B cell (primary cell): ENCODE measurements at regions of chr1 and their contacts with region 1.

Region 1: GRCh38 chr1:40774266-40774998 is 9.2 kb upstream of the KCNQ4 start:
- DNase-seq: peak; percentile 73
- ATAC-seq: peak; percentile 49
- H3K4me3 ChIP-seq: no peak overlapping the region
- H3K4me3 Mint-ChIP-seq: no peak overlapping the region
- H3K27ac ChIP-seq: no peak overlapping the region
- H3K27ac Mint-ChIP-seq: no peak overlapping the region
- H3K4me1 ChIP-seq: no peaks in the 10 kb centered on the region
- H3K4me1 Mint-ChIP-seq: peaks cover 2% of the 10 kb centered on the region
- H3K27me3 ChIP-seq: no peaks in the 10 kb centered on the region
- H3K27me3 Mint-ChIP-seq: no peaks in the 10 kb centered on the region
- CTCF ChIP-seq: peak; percentile 85

Region 2: DNA sequence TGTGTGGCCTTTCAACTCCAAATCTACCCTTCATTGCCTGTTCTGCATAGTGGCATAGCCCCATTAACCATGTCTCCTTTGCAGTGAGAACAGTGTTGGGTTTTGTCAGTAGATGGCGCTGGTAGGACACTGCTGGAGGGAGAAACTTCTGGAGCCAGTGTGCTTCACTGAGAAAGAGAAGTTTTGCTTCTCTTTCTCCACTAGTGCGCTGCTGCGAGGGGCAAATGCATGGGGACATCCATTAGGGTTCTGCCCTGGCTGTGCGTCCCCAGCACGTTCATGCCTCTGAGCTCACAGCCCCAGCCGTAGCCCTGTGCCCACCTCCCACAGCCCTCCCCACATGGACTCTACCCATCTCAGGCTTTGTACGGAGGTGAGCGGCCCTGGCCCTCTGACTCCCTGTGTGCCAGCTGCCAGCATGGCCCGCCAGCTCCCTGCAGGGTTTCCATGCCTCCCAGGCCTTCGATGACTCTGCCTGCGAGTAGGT is 162.0 kb before region 1 on chr1:
- CTCF ChIA-PET with region 1: interaction called, 9 read pairs
- POLR2A ChIA-PET with region 1: no interaction called
- intact Hi-C with region 1: loop called (anchors 5 kb)
- DNase-seq: peak; percentile 81
- ATAC-seq: peak; percentile 91
- H3K4me3 ChIP-seq: no peak overlapping the region
- H3K4me3 Mint-ChIP-seq: no peak overlapping the region
- H3K27ac ChIP-seq: no peak overlapping the region
- H3K27ac Mint-ChIP-seq: no peak overlapping the region
- H3K4me1 ChIP-seq: peaks cover 0 to 2% of the 10 kb centered on the region in 2 donors
- H3K4me1 Mint-ChIP-seq: no peaks in the 10 kb centered on the region
- H3K27me3 ChIP-seq: no peaks in the 10 kb centered on the region
- H3K27me3 Mint-ChIP-seq: peaks cover 3% of the 10 kb centered on the region
- CTCF ChIP-seq: peak; percentile 91

Region 3: GRCh38 chr1:40755067-40755466 is 19.4 kb before region 1 on chr1:
- CTCF ChIA-PET with region 1: interaction called, 40 read pairs
- POLR2A ChIA-PET with region 1: no interaction called
- intact Hi-C with region 1: no loop called
- DNase-seq: no peak
- ATAC-seq: no peak
- H3K4me3 ChIP-seq: no peak overlapping the region
- H3K4me3 Mint-ChIP-seq: no peak overlapping the region
- H3K27ac ChIP-seq: no peak overlapping the region
- H3K27ac Mint-ChIP-seq: no peak overlapping the region
- H3K4me1 ChIP-seq: no peaks in the 10 kb centered on the region
- H3K4me1 Mint-ChIP-seq: peaks cover 9% of the 10 kb centered on the region
- H3K27me3 ChIP-seq: no peaks in the 10 kb centered on the region
- H3K27me3 Mint-ChIP-seq: no peaks in the 10 kb centered on the region
- CTCF ChIP-seq: no peak

Region 4: GRCh38 chr1:40763742-40764532 is 10.5 kb before region 1 on chr1:
- CTCF ChIA-PET with region 1: interaction called, 38 read pairs
- POLR2A ChIA-PET with region 1: no interaction called
- intact Hi-C with region 1: no loop called
- DNase-seq: no peak
- ATAC-seq: no peak
- H3K4me3 ChIP-seq: no peak overlapping the region
- H3K4me3 Mint-ChIP-seq: peak overlapping the region; percentile 20
- H3K27ac ChIP-seq: peak overlapping the region in 1 of 2 donors; percentile 44
- H3K27ac Mint-ChIP-seq: peak overlapping the region; percentile 71
- H3K4me1 ChIP-seq: peaks cover 8 to 26% of the 10 kb centered on the region in 2 donors
- H3K4me1 Mint-ChIP-seq: peaks cover 33% of the 10 kb centered on the region
- H3K27me3 ChIP-seq: no peaks in the 10 kb centered on the region
- H3K27me3 Mint-ChIP-seq: no peaks in the 10 kb centered on the region
- CTCF ChIP-seq: no peak

Region 5: GRCh38 chr1:40802078-40802741 is 27.8 kb after region 1 on chr1:
- CTCF ChIA-PET with region 1: interaction called, 15 read pairs
- POLR2A ChIA-PET with region 1: interaction called, 3 read pairs
- intact Hi-C with region 1: no loop called
- DNase-seq: peak; percentile 88
- ATAC-seq: peak; percentile 95
- H3K4me3 ChIP-seq: peak overlapping the region; percentile 45 to 89 (median 58)
- H3K4me3 Mint-ChIP-seq: peak overlapping the region; percentile 86
- H3K27ac ChIP-seq: peak overlapping the region; percentile 25 to 39
- H3K27ac Mint-ChIP-seq: no peak overlapping the region
- H3K4me1 ChIP-seq: peaks cover 16 to 40% of the 10 kb centered on the region in 2 donors
- H3K4me1 Mint-ChIP-seq: peaks cover 30% of the 10 kb centered on the region
- H3K27me3 ChIP-seq: no peaks in the 10 kb centered on the region
- H3K27me3 Mint-ChIP-seq: no peaks in the 10 kb centered on the region
- CTCF ChIP-seq: no peak

Region 6: DNA sequence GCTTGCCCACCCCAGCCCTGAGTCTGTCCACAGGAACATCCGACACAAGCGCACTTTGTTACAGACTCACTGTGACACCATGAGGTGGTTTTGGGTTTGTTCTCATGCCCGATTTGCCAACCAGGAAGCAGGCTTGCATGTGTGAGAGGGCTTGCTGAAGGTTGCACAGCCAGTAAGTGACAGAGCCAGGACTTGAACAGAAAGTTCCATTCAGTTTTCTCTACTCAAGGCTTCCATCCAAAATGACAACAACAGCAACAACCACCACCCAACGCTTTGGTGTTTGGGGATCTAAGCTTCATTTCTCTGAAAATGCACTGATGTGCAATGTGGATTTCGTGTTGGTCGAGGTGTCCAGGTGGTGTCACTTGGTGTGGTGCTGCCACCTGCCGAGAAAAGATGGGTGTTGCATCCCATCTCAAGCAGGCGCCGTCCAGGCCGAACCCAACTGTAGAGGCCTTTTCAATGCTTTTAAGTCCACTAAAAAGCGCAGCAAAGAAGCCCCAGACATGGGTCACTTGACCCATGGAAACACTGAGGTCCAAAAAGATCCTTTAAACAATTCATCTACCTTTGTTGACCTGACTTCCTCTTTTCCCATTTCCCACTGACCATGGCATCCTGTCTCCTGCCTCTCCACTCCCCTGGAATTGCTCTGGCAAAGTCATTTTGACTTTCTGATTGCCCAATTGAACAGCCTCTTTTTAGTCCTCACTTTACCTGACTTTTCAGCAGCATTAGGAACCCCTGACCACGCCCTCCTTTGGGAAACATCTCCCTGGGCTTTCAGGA is 75.6 kb after region 1 on chr1:
- CTCF ChIA-PET with region 1: interaction called, 193 read pairs
- POLR2A ChIA-PET with region 1: no interaction called
- intact Hi-C with region 1: loop called (anchors 1 kb)
- DNase-seq: peak; percentile 85
- ATAC-seq: peak; percentile 98
- H3K4me3 ChIP-seq: no peak overlapping the region
- H3K4me3 Mint-ChIP-seq: peak overlapping the region; percentile 35
- H3K27ac ChIP-seq: no peak overlapping the region
- H3K27ac Mint-ChIP-seq: no peak overlapping the region
- H3K4me1 ChIP-seq: peaks cover 8% of the 10 kb centered on the region in 2 donors
- H3K4me1 Mint-ChIP-seq: peaks cover 11% of the 10 kb centered on the region
- H3K27me3 ChIP-seq: no peaks in the 10 kb centered on the region
- H3K27me3 Mint-ChIP-seq: peaks cover 5% of the 10 kb centered on the region
- CTCF ChIP-seq: peak; percentile 98

Region 7: GRCh38 chr1:40951943-40952743 is 177.7 kb after region 1 on chr1:
- CTCF ChIA-PET with region 1: interaction called, 24 read pairs
- POLR2A ChIA-PET with region 1: no interaction called
- intact Hi-C with region 1: no loop called
- DNase-seq: peak; percentile 64
- ATAC-seq: peak; percentile 41
- H3K4me3 ChIP-seq: no peak overlapping the region
- H3K4me3 Mint-ChIP-seq: no peak overlapping the region
- H3K27ac ChIP-seq: no peak overlapping the region
- H3K27ac Mint-ChIP-seq: no peak overlapping the region
- H3K4me1 ChIP-seq: peaks cover 5 to 6% of the 10 kb centered on the region in 2 donors
- H3K4me1 Mint-ChIP-seq: peaks cover 4% of the 10 kb centered on the region
- H3K27me3 ChIP-seq: peaks cover 0 to 27% (median 11%) of the 10 kb centered on the region in 4 experiments
- H3K27me3 Mint-ChIP-seq: peaks cover 43% of the 10 kb centered on the region
- CTCF ChIP-seq: peak; percentile 85

Region 8: GRCh38 chr1:41073971-41074370 is 299.5 kb after region 1 on chr1:
- CTCF ChIA-PET with region 1: no interaction called
- POLR2A ChIA-PET with region 1: no interaction called
- intact Hi-C with region 1: no loop called
- DNase-seq: no peak
- ATAC-seq: no peak
- H3K4me3 ChIP-seq: no peak overlapping the region
- H3K4me3 Mint-ChIP-seq: no peak overlapping the region
- H3K27ac ChIP-seq: no peak overlapping the region
- H3K27ac Mint-ChIP-seq: no peak overlapping the region
- H3K4me1 ChIP-seq: no peaks in the 10 kb centered on the region
- H3K4me1 Mint-ChIP-seq: no peaks in the 10 kb centered on the region
- H3K27me3 ChIP-seq: no peaks in the 10 kb centered on the region
- H3K27me3 Mint-ChIP-seq: no peaks in the 10 kb centered on the region
- CTCF ChIP-seq: no peak

Region 9: DNA sequence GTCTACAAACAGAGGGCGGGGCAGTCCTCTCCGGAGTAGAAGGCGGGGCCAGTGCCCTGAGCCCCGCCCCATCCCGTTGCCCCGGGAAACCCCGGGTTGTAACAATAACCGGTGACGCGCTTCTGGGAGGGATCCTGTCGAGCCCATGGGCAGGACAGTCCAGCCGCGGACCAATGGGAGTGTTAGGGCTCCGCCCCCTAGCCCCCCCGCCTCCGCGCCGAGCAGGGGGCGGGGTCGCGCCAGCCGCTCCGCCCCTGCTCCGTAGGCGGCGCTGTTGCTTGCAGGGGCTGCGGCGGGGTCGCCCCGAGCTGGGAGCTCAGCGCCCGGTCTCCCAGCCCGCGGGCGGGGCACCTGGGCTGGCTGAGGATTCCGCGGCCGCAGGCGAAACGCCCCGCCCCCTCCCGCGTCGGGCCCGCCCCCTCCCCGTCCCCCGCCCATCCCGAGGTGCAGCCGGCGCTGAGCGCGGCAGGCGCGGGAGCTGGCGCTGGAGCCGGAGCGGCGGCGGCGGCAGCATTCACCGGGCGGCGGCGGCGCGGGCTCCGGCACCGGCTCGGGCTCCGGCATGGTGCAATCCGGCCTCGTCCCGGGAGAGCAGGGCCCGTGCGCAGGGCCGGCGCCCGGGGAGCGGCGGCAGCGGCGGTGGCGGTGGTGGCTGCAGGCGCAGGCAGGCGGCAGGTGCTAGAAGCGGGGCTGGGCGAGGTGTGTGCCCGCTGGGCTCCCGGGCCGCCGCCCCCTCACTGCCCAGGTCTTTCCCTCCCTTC is 586.7 kb after region 1 on chr1 and contains the start of gene FOXO6:
- CTCF ChIA-PET with region 1: no interaction called
- POLR2A ChIA-PET with region 1: no interaction called
- intact Hi-C with region 1: no loop called
- DNase-seq: peak; percentile 97
- ATAC-seq: peak; percentile 93
- H3K4me3 ChIP-seq: peak within 1 kb of the TSS in 4 of 5 experiments; percentile 32 to 63 (median 49)
- H3K4me3 Mint-ChIP-seq: peak within 1 kb of the TSS; percentile 80
- H3K27ac ChIP-seq: peak within 1 kb of the TSS in 1 of 2 donors; percentile 58
- H3K27ac Mint-ChIP-seq: peak within 1 kb of the TSS; percentile 48
- H3K4me1 ChIP-seq: peaks cover 25 to 33% of the 10 kb centered on the region in 2 donors
- H3K4me1 Mint-ChIP-seq: peaks cover 29% of the 10 kb centered on the region
- H3K27me3 ChIP-seq: peaks cover 0 to 63% (median 21%) of the 10 kb centered on the region in 4 experiments
- H3K27me3 Mint-ChIP-seq: peaks cover 35% of the 10 kb centered on the region
- CTCF ChIP-seq: peak; percentile 48
- total RNA-seq, gene FOXO6: 0.15 and 0.17 TPM in 2 replicates